ENCODE measurements at regions of chr11 and their contacts with region 1.

Region 1: DNA sequence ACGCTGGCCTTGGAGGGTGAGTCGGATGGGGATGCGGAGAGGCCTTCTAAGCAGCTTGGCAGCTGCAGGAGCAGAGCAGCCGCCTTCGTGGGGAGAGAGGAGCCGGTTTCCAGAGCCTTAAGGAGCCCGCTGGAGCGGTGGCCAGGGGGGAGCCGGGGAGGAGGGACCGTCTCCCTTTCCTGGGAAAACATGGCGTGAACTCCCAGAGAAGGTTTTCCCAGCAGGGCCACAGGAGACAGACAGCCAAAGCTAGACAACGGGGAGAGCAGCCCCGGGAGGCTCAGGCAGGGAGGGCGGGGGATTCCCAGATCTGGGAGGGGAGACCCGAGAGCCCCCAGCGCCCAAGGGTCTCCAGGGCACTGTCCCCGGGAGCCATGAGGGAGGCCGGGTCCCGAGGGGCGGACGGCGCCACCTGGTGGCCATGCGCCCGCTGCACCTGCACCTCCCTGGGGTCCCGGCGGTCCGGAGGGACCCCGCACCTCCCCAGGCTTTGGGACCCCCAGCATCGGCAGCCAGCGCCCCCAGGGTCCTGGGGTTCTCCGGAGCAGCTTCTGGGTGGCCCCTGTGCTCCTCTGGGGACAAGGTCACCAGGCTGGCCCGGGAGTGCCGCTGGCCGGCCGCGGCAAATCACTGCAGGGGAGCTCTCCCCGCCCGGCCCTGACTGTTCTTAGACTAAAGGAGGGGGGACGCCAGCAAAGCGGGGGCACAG is 2.4 kb upstream of the SYT8 start:
- DNase-seq: peak in 2 of 3 donors; percentile 48 to 53
- H3K4me3 ChIP-seq: no peak overlapping the region
- H3K27ac ChIP-seq: no peak overlapping the region
- H3K4me1 ChIP-seq: peaks cover 0 to 16% (median 7%) of the 10 kb centered on the region in 4 experiments
- H3K27me3 ChIP-seq: peaks cover 0 to 13% (median 2%) of the 10 kb centered on the region in 5 experiments

Region 2: DNA sequence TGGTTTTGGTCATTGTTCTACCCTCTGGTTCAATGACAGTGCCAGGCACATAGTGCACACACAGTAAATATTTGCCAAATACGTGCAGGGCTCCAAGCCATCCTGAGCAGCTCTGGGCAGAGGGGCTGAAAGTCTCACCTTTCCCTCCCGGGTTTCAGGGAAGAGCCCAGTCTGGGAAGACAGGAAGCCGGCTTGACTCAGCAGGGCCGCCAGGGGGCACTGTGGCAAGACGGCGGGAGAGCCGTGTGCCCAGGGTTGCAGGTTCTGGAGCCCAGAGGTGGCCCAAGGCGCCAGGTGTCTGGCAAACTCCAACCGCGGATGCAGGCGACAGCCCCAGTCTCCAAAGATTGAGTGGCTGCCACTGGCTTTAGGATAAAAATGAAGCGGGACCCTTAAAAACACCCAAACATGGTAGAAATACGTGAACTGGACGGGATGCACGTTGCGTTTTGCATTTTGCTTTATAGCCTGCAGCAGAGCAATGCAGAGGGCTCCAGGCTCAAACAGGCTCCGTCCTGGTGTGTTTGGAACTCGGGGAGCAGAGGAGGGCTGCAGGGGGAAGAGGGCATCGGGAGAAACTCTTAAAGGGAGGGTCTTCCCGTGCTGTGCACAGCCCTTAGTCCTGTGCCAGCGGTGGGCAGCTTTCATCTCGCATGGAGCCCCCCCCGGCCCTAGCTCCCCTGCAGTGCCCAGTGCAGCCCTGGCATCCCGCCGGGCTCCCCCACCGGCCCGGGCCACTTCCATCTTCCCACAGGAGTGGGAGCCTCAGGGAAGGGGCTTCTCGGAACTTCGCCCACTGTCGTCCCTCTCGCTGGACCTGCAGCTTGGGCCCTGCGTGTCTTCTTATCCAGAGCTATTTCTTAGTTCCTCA is 192.1 kb before region 1 on chr11:
- CTCF ChIA-PET with region 1: interaction called, 25 read pairs
- POLR2A ChIA-PET with region 1: no interaction called
- DNase-seq: peak; percentile 22 to 27 (median 23)
- H3K4me3 ChIP-seq: no peak overlapping the region
- H3K27ac ChIP-seq: no peak overlapping the region
- H3K4me1 ChIP-seq: peaks cover 0 to 11% (median 5%) of the 10 kb centered on the region in 4 experiments
- H3K27me3 ChIP-seq: peaks cover 0 to 17% (median 7%) of the 10 kb centered on the region in 5 experiments

Region 3: DNA sequence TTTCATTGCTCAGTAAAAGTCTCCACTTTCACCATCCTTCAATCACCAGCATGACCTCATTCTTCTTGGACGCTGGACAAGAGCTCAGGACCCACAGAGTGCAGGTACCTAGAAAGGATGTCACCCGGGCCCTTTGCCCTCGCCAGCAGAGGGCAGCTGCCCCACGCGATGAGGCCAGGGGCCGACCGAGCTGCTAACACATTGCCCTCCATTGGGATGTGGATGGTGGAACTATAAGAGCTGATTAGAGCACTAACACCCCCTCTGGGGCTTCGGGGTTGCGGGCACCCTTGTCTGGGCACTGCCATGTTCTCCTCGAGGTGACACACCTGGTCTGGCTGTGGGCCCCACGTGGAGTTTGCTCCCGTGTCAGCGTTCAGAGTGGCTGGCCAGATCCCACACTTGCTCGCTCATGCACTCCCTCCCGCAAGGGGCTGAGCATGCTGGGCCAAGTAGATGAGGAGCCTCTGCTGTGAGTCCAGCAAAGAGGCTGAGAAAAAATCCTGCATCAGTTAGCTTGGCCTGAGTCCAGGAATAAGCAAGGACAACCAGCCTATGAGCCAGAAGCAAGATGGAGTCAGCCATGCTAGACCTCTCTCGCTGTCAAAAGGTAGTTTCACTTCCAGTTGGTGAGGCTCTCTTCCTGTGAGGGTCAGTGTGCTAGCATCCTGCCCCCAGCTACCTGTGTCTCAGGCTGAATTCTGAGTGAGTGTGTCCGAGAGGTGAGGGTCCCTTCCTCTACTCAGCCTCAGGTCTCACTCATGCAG is 125.5 kb before region 1 on chr11:
- CTCF ChIA-PET with region 1: interaction called, 92 read pairs
- POLR2A ChIA-PET with region 1: no interaction called
- DNase-seq: peak; percentile 31 to 50 (median 44)
- H3K4me3 ChIP-seq: no peak overlapping the region
- H3K27ac ChIP-seq: no peak overlapping the region
- H3K4me1 ChIP-seq: peaks cover 0 to 7% (median 0%) of the 10 kb centered on the region in 4 experiments
- H3K27me3 ChIP-seq: peaks cover 0 to 3% (median 0%) of the 10 kb centered on the region in 5 experiments

Region 4: GRCh38 chr11:1772270-1773130 is 59.9 kb before region 1 on chr11:
- CTCF ChIA-PET with region 1: no interaction called
- POLR2A ChIA-PET with region 1: no interaction called
- DNase-seq: peak; percentile 92 to 98 (median 97)
- H3K4me3 ChIP-seq: peak overlapping the region in 5 of 7 experiments; percentile 3 to 56 (median 37)
- H3K27ac ChIP-seq: peak overlapping the region in 1 of 2 experiments; percentile 10
- H3K4me1 ChIP-seq: peaks cover 4 to 32% (median 25%) of the 10 kb centered on the region in 4 experiments
- H3K27me3 ChIP-seq: no peaks in the 10 kb centered on the region

Region 5: GRCh38 chr11:1807264-1807995 is 24.9 kb before region 1 on chr11:
- CTCF ChIA-PET with region 1: interaction called, 11 read pairs
- POLR2A ChIA-PET with region 1: no interaction called
- DNase-seq: peak; percentile 38 to 66 (median 61)
- H3K4me3 ChIP-seq: no peak overlapping the region
- H3K27ac ChIP-seq: no peak overlapping the region
- H3K4me1 ChIP-seq: peaks cover 0 to 12% (median 4%) of the 10 kb centered on the region in 4 experiments
- H3K27me3 ChIP-seq: peaks cover 0 to 20% (median 4%) of the 10 kb centered on the region in 5 experiments

Region 6: DNA sequence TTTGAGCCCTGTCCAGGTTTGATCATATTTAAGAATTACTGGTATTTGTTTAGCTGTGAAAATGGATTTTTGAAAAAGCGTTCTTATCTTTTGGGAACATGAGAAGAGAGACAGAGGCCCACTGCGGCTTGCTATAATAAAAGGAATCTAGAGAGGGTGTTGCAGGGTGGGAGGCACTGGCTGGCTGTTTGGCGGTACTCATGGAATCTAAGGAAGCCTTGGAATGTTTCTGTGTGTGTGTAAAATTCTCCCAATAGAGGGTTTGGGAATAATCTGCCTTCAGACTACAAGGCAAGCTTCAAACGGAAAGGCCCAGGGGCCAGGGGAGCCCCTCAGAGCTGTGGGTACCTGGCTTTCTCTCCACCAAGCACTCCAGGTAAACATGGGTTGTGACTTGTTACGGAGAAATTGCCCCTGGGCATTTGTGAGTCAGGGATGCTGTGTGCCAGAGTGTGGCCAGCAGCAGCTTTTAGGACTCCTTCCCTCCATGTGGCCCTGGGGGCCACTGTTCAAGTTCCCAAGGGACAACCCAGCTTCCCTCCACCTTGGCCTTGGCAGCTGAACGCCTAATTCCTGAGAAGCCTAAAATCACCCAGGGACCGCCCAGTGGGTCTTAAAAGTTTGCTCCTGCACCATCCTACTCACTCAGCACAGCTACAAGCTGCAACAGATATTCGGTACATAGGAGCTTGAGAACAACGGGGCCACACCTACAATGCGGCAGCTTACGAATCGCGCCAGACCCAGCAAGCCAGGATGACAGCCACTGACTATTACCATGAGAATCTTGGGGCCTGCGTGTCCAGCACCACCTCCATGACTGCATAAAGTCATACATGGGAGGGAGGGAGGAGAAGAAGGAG is 11.7 kb before region 1 on chr11:
- CTCF ChIA-PET with region 1: interaction called, 18 read pairs
- POLR2A ChIA-PET with region 1: no interaction called
- DNase-seq: no peak
- H3K4me3 ChIP-seq: no peak overlapping the region
- H3K27ac ChIP-seq: no peak overlapping the region
- H3K4me1 ChIP-seq: peaks cover 0 to 4% (median 0%) of the 10 kb centered on the region in 4 experiments
- H3K27me3 ChIP-seq: peaks cover 0 to 7% (median 3%) of the 10 kb centered on the region in 5 experiments

Measured in common myeloid progenitor, CD34-positive (primary cell).